GM18951 (cell line): ENCODE measurements at regions of chr14 and their contacts with region 1.

Region 1: DNA sequence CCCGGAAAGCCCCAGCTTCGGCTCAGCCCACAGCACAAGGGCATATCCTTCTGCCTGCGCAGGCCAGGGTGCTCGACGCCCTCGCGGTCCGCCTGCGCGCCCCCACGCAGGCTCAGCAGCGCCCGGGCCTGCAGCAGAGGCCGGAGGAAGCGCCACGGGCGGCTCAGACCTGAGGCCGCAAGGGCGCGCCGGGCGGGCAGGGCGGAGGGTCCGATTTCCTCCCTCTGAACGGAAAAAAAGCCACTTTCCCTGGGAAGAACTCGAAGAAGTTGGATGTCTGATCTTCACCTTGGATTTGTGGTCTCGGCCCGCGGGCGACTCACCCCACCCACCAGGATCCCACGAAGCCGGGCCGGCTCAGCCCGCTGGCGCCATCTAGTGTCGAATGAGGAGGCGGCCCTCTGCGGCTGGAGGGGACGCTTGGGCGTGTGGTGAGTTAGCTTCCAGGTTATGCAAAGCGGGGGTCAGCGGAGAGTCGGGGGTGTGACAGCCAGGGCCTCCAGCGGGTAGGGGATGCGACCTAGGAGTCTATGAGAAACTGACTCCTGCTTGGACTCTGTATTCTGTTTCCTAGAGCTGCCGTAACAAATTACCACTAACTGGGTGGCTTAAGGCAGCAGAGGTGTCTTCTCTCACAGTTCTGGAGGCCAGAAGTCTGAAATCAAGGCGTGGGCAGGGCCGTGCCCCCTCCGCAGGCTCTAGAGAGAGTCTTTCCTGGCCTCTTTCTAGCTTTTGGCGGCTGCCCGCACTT is 40.0 kb upstream of the SRSF5 start:
- POLR2A ChIP-seq: no peak

Region 2: GRCh38 chr14:69242311-69243224 is 484.4 kb before region 1 on chr14:
- in situ Hi-C with region 1: loop called (anchors 25 kb)
- POLR2A ChIP-seq: no peak

Region 3: GRCh38 chr14:69594801-69595200 is 132.1 kb before region 1 on chr14:
- in situ Hi-C with region 1: loop called (anchors 5 kb)
- POLR2A ChIP-seq: no peak